ENCODE measurements at regions of chr21 and their contacts with region 1.

Region 1: GRCh38 chr21:42381334-42381984 is 14.4 kb downstream of the TMPRSS3 start:
- DNase-seq: peak; percentile 77
- ATAC-seq: peak; percentile 79
- H3K4me3 ChIP-seq: no peak overlapping the region
- H3K27ac ChIP-seq: peak overlapping the region; percentile 10; the same call in 1 of the 2 replicates
- H3K4me1 ChIP-seq: peaks cover 13% of the 10 kb centered on the region
- H3K27me3 ChIP-seq: no peaks in the 10 kb centered on the region
- CTCF ChIP-seq: peak; percentile 98

Region 2: GRCh38 chr21:42145569-42146272 is 235.7 kb before region 1 on chr21:
- CTCF ChIA-PET with region 1: interaction called, 5 read pairs
- POLR2A ChIA-PET with region 1: no interaction called
- intact Hi-C with region 1: loop called (anchors 5 kb)
- DNase-seq: peak; percentile 77
- ATAC-seq: peak; percentile 92
- H3K4me3 ChIP-seq: no peak overlapping the region
- H3K27ac ChIP-seq: no peak overlapping the region
- H3K4me1 ChIP-seq: no peaks in the 10 kb centered on the region
- H3K27me3 ChIP-seq: no peaks in the 10 kb centered on the region
- CTCF ChIP-seq: peak; percentile 95

Region 3: GRCh38 chr21:42337830-42338728 is 43.4 kb before region 1 on chr21:
- CTCF ChIA-PET with region 1: interaction called, 23 read pairs
- POLR2A ChIA-PET with region 1: no interaction called
- intact Hi-C with region 1: loop called (anchors 1 kb)
- DNase-seq: peak; percentile 95
- ATAC-seq: peak; percentile 92
- H3K4me3 ChIP-seq: peak overlapping the region; percentile 41
- H3K27ac ChIP-seq: peak overlapping the region; percentile 94
- H3K4me1 ChIP-seq: peaks cover 15% of the 10 kb centered on the region
- H3K27me3 ChIP-seq: no peaks in the 10 kb centered on the region
- CTCF ChIP-seq: peak; percentile 92

Region 4: DNA sequence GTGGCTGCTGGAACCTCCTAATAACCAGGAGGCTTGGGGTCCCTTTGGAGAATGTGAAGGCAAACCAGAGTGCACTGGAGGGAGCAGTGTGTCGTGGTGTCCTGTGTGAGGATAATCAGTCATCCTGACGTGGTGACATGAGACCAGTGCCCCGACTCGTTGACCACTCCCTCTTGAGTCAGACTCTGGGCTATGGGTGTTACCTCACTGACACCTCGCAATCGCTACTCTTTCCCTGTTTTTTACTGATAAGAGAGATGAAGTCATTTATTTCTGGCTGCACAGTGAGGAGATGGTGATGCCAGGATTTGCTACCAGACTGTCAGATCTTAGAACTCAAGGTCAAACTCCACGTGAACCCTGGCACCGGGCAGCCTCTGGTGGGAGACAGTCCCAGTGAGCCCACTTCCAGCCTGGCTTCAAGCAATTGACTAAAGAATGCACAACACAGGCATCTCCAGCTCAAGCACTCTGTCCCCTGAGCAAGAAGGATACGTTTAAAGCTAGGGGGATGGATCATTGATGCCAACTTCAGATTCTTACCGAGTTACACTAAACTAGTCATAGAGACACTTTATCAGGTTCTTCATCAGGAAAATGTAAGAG is 52.6 kb after region 1 on chr21:
- CTCF ChIA-PET with region 1: no interaction called
- POLR2A ChIA-PET with region 1: no interaction called
- intact Hi-C with region 1: no loop called
- DNase-seq: peak; percentile 17
- ATAC-seq: no peak
- H3K4me3 ChIP-seq: no peak overlapping the region
- H3K27ac ChIP-seq: no peak overlapping the region
- H3K4me1 ChIP-seq: no peaks in the 10 kb centered on the region
- H3K27me3 ChIP-seq: 0 out of 2 replicates have a peak, but pooled peaks cover 7% of the 10 kb centered on the region
- CTCF ChIP-seq: no peak

Region 5: DNA sequence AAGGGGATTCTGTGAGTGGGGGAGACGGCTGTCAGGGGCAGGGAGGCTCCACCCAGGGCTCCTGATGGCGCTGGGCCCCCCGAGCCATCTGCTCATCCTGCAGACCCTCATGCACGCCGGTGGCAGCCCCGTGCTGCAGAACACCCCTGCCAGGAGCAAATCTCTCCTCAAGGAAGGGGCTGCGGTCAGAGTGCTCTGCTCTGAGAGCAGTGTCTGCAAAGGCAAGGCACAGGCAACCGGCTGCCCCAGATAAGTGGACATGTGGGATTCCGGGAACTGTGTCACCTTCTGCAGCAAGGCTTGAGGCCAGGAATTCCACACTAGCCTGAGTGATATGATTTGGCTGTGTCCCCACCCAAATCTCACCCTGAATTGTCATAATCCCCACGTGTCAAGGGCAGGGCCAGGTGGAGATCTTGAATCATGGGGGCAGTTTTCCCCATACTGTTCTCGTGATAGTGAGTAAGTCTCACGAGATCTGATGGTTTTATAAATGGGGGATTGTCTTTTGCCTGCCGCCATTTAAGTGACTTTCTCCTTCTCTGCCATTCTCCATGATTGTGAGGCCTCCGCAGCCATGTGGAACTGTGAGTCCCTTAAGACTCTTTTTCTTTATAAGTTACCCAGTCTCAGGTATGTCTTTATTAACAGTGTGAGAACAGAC is 372.9 kb after region 1 on chr21:
- CTCF ChIA-PET with region 1: no interaction called
- POLR2A ChIA-PET with region 1: no interaction called
- intact Hi-C with region 1: no loop called
- DNase-seq: no peak
- ATAC-seq: no peak
- H3K4me3 ChIP-seq: no peak overlapping the region
- H3K27ac ChIP-seq: no peak overlapping the region
- H3K4me1 ChIP-seq: no peaks in the 10 kb centered on the region
- H3K27me3 ChIP-seq: peaks cover 29% of the 10 kb centered on the region
- CTCF ChIP-seq: no peak

Measured in PC-3 (cell line).